AG04450 (cell line): ENCODE measurements at regions of chr10 and their contacts with region 1.

Region 1: DNA sequence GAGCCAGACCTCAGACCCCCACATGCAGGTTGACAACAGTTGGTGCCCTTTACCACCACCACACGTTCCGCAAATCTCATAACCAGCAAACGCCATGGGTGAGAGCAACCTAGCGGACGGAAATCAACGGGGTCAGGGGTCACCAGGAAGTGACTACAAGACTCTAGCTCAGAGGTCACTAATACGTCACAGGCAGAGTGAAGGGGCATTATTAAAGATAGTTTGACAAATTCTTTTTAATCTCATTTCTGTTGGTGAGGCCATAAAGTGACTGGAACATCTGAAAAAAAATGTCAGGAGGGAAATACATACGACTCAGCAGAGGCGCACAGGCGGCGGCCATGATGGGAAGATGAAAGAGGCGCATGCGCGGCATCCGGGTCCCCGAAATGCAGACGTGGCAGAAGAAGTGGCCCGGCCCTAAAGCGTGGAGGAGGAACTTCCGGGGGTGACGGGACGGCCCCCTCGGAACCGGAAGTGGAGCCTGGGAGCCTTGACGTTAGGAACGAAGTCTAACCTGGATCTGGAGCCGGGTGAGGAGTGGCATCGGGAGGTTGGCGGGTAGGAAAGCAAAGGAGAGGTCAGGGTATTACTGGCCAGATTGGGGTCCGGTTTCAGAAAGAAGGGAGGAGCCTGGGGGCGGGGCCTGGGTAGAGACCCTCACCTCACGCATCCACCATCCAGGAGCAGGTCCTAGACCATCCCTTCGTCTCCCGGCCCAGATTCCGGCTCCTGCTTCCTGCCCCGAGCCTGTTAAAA is at the start of gene SEC24C:
- DNase-seq: peak; percentile 90
- H3K4me3 ChIP-seq: peak within 1 kb of the TSS; percentile 96
- H3K27ac ChIP-seq: peak within 1 kb of the TSS; percentile 96
- H3K27me3 ChIP-seq: no peaks in the 10 kb centered on the region
- CTCF ChIP-seq: no peak
- polyA plus RNA-seq, gene SEC24C: 86.9 and 97.4 TPM in 2 replicates

Region 2: DNA sequence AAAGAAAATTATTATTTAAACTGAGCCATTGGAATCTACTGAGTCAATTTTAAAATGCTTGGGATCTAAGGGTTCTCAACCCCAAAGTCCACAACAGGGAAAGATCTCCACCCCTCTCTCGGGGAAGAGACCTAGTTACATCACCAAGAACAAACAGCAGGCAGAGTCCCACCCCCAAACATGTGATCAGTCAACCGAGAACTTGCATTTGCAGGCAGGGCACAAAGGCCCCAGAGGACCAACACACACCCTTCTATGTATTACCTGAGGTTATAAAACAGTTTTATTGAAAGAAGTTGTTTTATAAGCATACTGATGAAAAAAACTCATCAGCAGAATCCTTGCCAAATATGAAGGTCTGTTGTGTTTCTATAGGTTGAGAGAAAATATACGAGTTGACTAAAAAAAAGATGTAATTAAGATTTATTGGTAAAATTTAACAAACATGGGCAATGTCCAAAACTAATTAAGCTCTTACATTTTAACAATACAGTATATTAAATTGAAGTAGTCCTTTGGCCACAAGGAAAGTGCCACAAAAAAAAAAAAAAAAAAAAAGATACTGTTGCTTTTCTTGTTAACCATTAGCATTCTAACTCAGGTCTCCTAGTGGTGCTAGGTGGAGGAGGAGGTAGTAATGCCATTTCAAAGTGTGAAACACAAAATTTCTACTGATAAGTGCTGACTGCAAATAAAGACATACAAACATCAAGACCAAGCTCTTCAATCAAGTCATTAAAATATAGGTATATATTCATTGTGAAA is 152.0 kb before region 1 on chr10:
- CTCF ChIA-PET with region 1: no interaction called
- POLR2A ChIA-PET with region 1: no interaction called
- DNase-seq: no peak
- H3K4me3 ChIP-seq: no peak overlapping the region
- H3K27ac ChIP-seq: no peak overlapping the region
- H3K27me3 ChIP-seq: no peaks in the 10 kb centered on the region
- CTCF ChIP-seq: no peak

Region 3: GRCh38 chr10:73730153-73730906 is 13.8 kb before region 1 on chr10:
- CTCF ChIA-PET with region 1: no interaction called
- POLR2A ChIA-PET with region 1: interaction called, 27 read pairs
- DNase-seq: peak; percentile 33
- H3K4me3 ChIP-seq: peak overlapping the region; percentile 96
- H3K27ac ChIP-seq: peak overlapping the region; percentile 85
- H3K27me3 ChIP-seq: no peaks in the 10 kb centered on the region
- CTCF ChIP-seq: no peak

Region 4: GRCh38 chr10:73772280-73773151 is 28.4 kb after region 1 on chr10:
- CTCF ChIA-PET with region 1: interaction called, 4 read pairs
- POLR2A ChIA-PET with region 1: interaction called, 14 read pairs
- DNase-seq: peak; percentile 48
- H3K4me3 ChIP-seq: peak overlapping the region; percentile 80
- H3K27ac ChIP-seq: peak overlapping the region; percentile 87
- H3K27me3 ChIP-seq: no peaks in the 10 kb centered on the region
- CTCF ChIP-seq: no peak